ENCODE measurements at regions of chr7 and their contacts with region 1.

Region 1: GRCh38 chr7:77439572-77439971 is 23.4 kb upstream of the GSAP start:
- DNase-seq: peak; percentile 51 to 78
- ATAC-seq: peak; percentile 99
- H3K4me3 ChIP-seq: no peak overlapping the region
- H3K27ac ChIP-seq: peak overlapping the region; percentile 72 to 84
- H3K4me1 ChIP-seq: peaks cover 48% of the 10 kb centered on the region
- CTCF ChIP-seq: peak; percentile 82
- EP300 ChIP-seq: no peak
- POLR2A ChIP-seq: no peak
- RAD21 ChIP-seq: peak; percentile 92 to 95

Region 2: DNA sequence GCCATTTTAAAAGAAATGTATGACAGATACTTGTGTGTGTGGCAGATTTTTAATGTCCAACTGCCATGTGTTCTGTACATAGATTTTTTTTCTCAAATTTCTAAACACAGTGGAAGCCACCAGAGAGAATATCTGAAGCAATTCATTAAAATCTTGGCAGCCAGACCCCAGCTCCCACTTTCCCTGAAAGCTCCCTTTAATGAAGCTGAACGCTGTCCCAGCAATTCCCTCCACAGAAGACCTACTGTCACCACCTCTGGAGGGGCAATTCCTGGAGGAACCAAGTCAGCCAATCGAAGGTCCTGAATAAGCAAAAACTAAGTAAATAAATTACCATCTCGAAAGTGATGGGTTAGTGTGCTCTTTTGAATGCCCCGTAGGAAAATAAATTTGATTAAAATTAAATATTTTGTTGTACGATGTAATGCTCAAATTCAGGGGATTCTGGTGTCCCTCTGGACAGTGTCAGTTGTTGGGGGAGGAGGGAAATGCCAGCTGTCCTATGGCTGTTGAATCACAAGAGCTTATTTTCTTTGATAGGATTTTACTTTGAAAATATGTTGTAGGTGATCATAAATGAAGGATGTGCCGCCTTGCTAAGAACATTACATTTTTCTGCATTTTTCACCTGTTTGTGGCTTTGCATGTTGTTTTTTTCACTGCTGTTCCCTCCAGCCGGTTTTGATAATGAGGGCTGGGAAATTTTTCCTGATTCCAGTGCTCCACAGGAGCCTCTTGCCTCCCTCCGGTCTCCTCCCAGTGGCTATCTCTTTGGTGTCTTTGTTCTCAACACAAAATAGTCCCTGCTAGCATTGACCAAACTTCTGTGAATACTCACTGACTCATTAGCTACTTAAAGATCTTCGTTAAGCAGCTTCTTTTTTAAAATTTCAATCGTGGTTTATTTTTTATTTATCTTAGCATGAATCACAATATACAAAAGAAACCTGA is 14.2 kb before region 1 on chr7:
- CTCF ChIA-PET with region 1: interaction called, 20 read pairs
- POLR2A ChIA-PET with region 1: interaction called, 4 read pairs
- DNase-seq: peak; percentile 53
- ATAC-seq: peak; percentile 81 to 83
- H3K4me3 ChIP-seq: peak overlapping the region; percentile 16; the same call in 2 of the 3 replicates
- H3K27ac ChIP-seq: peak overlapping the region; percentile 70 to 81
- H3K4me1 ChIP-seq: peaks cover 37% of the 10 kb centered on the region
- CTCF ChIP-seq: no peak
- EP300 ChIP-seq: no peak
- POLR2A ChIP-seq: no peak
- RAD21 ChIP-seq: no peak

Region 3: GRCh38 chr7:77455324-77455723 is 15.8 kb after region 1 on chr7:
- CTCF ChIA-PET with region 1: interaction called, 11 read pairs
- POLR2A ChIA-PET with region 1: no interaction called
- DNase-seq: peak; percentile 68 to 82
- ATAC-seq: peak; percentile 89 to 96
- H3K4me3 ChIP-seq: peak overlapping the region; percentile 8; the same call in 1 of the 3 replicates
- H3K27ac ChIP-seq: peak overlapping the region; percentile 73 to 83
- H3K4me1 ChIP-seq: peaks cover 78% of the 10 kb centered on the region
- CTCF ChIP-seq: no peak
- EP300 ChIP-seq: no peak; a peak in 1 of 5 replicates
- POLR2A ChIP-seq: no peak
- RAD21 ChIP-seq: 0 out of 5 replicates have a peak, but pooled peaks of 1 of the 2 experiments have one; percentile 31

Region 4: DNA sequence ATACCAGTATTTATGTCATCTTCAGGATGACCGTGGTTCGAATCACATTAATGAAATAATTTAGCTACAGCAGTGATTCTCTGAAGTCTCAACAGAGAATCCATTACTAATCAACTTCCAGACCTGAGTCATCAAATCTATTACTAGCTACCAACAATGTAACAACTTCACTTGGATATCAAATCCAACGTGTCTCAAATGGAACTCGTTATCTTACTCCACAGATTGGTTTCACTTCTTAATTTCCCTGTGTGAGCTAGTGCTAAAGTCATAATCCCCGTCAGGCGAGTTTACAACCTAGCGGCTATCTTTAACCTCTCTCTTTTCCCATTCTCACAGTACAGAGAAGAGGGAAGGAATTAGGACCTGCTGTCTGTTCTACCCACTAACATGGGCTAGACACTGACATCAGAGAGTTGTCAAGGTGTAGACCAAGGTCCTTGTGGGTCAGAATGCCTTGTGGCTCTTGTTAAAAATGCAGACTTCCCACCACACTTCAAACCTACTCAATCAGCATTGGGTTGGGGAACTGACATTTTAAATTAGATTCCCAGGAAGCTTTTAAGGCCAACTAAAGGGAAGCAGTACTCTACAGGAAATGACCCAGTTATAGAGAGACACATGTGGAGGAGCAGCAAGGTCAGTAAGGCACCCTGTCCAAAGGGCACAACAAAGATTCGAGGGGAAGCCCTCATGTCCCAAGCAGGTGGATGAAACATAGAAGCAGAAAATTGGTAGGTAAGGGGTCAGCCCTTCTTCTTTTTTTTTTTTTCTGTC is 33.8 kb after region 1 on chr7:
- CTCF ChIA-PET with region 1: interaction called, 10 read pairs
- POLR2A ChIA-PET with region 1: interaction called, 6 read pairs
- DNase-seq: no peak
- ATAC-seq: no peak
- H3K4me3 ChIP-seq: no peak overlapping the region
- H3K27ac ChIP-seq: peak overlapping the region; percentile 31 to 66; a peak in 3 of 6 replicates
- H3K4me1 ChIP-seq: peaks cover 22% of the 10 kb centered on the region
- CTCF ChIP-seq: no peak
- EP300 ChIP-seq: no peak
- POLR2A ChIP-seq: no peak
- RAD21 ChIP-seq: no peak

Measured in A549 (cell line).